ENCODE measurements at regions of chr13 and their contacts with region 1.

Region 1: DNA sequence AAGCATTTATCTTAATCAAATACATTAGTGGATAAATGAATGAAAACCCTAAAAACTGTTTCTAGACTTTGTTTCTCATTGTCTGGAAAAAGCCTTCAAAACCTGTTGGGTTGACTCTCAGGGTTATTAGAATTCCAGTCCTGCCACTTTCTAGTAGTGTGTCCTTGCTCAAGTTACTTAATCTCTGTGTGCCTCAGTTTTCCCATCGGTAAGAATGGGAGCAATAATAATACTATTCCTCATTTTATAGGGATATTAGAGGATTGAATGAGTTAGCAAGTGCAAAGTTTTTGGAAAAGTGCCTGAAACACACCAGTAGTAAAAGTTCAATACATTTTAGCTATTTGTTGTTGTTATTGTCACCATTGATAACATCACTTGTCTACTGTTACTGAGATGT is 2.9 kb downstream of the URAD start:
- DNase-seq: no peak
- H3K4me3 ChIP-seq: no peak overlapping the region
- H3K27ac ChIP-seq: no peak overlapping the region
- H3K4me1 ChIP-seq: peaks cover 0 to 2% (median under 1%) of the 10 kb centered on the region in 4 experiments
- H3K27me3 ChIP-seq: peaks cover 7 to 30% (median 18%) of the 10 kb centered on the region in 5 experiments

Region 2: GRCh38 chr13:27374650-27375049 is 611.0 kb before region 1 on chr13:
- CTCF ChIA-PET with region 1: interaction called, 11 read pairs
- POLR2A ChIA-PET with region 1: no interaction called
- DNase-seq: peak; percentile 83 to 89 (median 85)
- H3K4me3 ChIP-seq: no peak overlapping the region
- H3K27ac ChIP-seq: no peak overlapping the region
- H3K4me1 ChIP-seq: peaks cover 0 to 1% (median 0%) of the 10 kb centered on the region in 4 experiments
- H3K27me3 ChIP-seq: peaks cover 0 to 15% (median 11%) of the 10 kb centered on the region in 5 experiments

Region 3: GRCh38 chr13:27997904-27998522 is 12.4 kb after region 1 on chr13:
- CTCF ChIA-PET with region 1: interaction called, 22 read pairs
- POLR2A ChIA-PET with region 1: no interaction called
- DNase-seq: peak; percentile 50 to 73 (median 64)
- H3K4me3 ChIP-seq: no peak overlapping the region
- H3K27ac ChIP-seq: no peak overlapping the region
- H3K4me1 ChIP-seq: no peaks in the 10 kb centered on the region
- H3K27me3 ChIP-seq: no peaks in the 10 kb centered on the region

Region 4: DNA sequence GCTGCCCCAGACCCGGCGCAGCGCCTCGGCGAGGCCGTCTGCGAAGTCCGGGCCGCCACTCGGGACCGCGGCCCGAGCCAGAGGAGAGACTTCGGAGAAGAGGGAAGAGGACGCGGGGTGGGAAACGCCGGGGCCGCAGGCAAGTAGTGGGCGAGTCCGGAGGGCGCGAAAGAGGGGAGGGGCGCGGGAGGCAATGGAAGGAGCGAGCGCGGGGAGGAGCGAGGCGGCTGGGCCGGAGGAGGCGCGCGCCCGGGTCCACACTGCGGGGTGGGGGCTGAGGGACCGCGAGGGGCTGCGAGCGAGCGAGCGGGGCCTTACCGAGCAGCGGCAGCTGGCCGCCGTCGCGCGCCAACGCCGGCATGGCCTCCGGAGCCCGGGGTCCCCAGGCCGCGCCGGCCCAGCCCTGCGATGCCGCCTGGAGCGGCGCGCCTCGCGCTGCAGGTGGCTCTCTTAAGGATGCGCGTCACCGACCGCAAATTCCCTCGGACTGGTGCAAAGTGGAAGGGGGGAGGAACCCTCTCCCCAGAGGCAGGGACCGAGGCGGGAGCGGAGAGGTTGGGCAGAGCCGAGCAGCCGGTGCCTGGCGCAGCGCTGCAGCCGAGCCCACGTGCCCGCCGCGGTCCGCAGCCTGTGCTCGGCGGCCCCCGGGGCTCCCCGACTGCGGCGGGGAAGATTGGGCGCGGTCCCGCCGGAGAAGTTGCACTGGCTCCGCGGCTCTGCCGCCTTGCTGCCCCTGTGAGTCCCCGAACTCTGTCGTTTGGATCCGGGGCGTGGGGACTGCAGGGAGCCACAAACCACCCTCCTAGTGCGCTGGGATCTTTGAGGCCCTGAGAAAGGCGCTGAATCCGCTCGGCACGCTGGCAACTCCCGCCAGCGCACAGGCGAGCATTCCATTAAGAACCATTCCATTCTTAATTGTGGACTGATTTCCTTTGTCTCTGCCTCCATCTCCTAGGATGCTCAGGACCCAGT is 114.8 kb after region 1 on chr13 and contains the start of gene FLT3:
- CTCF ChIA-PET with region 1: no interaction called
- POLR2A ChIA-PET with region 1: no interaction called
- DNase-seq: peak; percentile 95 to 99 (median 99)
- H3K4me3 ChIP-seq: peak within 1 kb of the TSS; percentile 73 to 88 (median 82)
- H3K27ac ChIP-seq: peak within 1 kb of the TSS; percentile 79 to 89
- H3K4me1 ChIP-seq: peaks cover 19 to 54% (median 31%) of the 10 kb centered on the region in 4 experiments
- H3K27me3 ChIP-seq: no peaks in the 10 kb centered on the region